ENCODE measurements at regions of chr12 and their contacts with region 1.

Region 1: DNA sequence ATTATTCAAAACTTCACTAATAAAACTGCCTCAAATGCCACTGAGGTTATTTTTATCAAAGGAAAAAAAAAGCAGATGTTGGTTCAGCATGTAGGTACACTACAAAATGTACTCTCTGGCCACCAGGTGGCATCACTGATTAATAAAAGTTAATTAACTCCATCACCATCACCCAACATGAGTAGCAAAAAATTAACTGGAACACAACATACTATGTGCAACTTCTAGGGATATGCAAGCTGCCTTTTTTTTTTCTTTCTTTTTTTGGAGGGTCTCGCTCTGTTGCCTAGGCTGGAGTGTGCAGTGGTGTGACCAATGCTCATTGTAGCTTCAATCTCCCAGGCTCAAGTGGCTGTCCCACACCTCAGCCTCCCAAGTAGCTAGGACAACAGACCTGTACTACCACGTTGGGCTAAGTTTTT is 43.8 kb upstream of the NR2C1 start:
- DNase-seq: peak; percentile 89
- H3K4me3 ChIP-seq: no peak overlapping the region
- H3K27ac ChIP-seq: no peak overlapping the region
- H3K4me1 ChIP-seq: peaks cover 8% of the 10 kb centered on the region
- CTCF ChIP-seq: peak; percentile 93

Region 2: GRCh38 chr12:95151821-95152220 is 34.6 kb after region 1 on chr12:
- CTCF ChIA-PET with region 1: no interaction called
- POLR2A ChIA-PET with region 1: no interaction called
- intact Hi-C with region 1: no loop called
- DNase-seq: no peak
- H3K4me3 ChIP-seq: no peak overlapping the region
- H3K27ac ChIP-seq: no peak overlapping the region
- H3K4me1 ChIP-seq: no peaks in the 10 kb centered on the region
- CTCF ChIP-seq: no peak

Region 3: DNA sequence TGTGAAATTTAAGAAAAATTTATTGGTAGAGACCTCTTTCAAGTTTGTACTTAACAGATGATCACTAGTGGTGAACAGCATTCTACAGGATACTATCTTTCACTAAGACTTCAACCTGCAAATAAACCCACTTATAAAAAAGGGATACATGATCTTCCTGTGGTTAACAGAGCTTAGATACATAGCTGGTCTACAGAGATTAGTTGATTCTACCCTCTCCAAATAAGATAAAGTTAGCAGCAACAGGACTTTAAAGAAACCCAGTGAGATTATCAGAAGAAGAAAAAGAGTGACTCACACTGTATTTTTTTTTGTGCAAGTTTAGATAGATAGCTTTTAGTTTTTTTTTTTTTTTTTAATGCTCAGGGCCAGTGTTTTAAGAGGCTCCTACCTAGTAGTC is 399.6 kb after region 1 on chr12:
- CTCF ChIA-PET with region 1: no interaction called
- POLR2A ChIA-PET with region 1: no interaction called
- intact Hi-C with region 1: loop called (anchors 5 kb)
- DNase-seq: no peak
- H3K4me3 ChIP-seq: no peak overlapping the region
- H3K27ac ChIP-seq: no peak overlapping the region
- H3K4me1 ChIP-seq: no peaks in the 10 kb centered on the region
- CTCF ChIP-seq: no peak